A549 (cell line): ENCODE measurements at regions of chr12 and their contacts with region 1.

Region 1: GRCh38 chr12:25436203-25437030 is 116.7 kb downstream of the LMNTD1 start:
- DNase-seq: peak; percentile 63 to 83
- ATAC-seq: peak; percentile 83 to 88
- H3K4me3 ChIP-seq: peak overlapping the region; percentile 49
- H3K27ac ChIP-seq: peak overlapping the region; percentile 81 to 82
- H3K4me1 ChIP-seq: peaks cover 26% of the 10 kb centered on the region
- CTCF ChIP-seq: peak; percentile 96
- EP300 ChIP-seq: no peak
- POLR2A ChIP-seq: no peak
- RAD21 ChIP-seq: peak; percentile 89 to 90

Region 2: DNA sequence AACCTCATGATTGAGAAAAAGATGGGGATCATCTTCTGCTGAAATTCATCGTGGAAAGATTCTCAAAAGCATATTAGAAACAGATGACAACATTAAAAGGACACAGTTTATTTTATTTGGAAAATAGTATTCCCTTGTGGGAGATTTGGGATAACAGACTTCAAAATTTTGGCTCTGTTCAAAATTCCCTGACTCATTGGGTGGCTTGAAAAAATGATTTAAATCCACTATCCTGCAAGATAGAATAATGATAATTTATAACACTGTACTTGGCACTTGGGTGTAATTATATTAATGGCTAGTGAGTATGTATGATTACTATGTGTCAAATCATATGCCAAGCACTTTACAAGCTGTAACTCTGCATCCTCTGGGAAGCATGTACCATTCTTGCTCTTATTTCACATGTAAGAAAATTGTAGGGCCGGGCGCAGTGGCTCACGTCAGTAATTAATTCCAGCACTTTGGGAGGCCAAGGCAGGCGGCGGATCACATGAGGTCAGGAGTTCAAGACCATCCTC is 12.1 kb before region 1 on chr12:
- CTCF ChIA-PET with region 1: interaction called, 39 read pairs
- POLR2A ChIA-PET with region 1: no interaction called
- DNase-seq: no peak
- ATAC-seq: no peak
- H3K4me3 ChIP-seq: no peak overlapping the region
- H3K27ac ChIP-seq: no peak overlapping the region
- H3K4me1 ChIP-seq: peaks cover 9% of the 10 kb centered on the region; the same call in 2 of the 3 replicates
- CTCF ChIP-seq: no peak
- EP300 ChIP-seq: no peak
- POLR2A ChIP-seq: no peak
- RAD21 ChIP-seq: no peak

Region 3: GRCh38 chr12:25458047-25458552 is 21.7 kb after region 1 on chr12:
- CTCF ChIA-PET with region 1: interaction called, 14 read pairs
- POLR2A ChIA-PET with region 1: no interaction called
- DNase-seq: peak; percentile 61 to 68
- ATAC-seq: peak; percentile 92 to 97
- H3K4me3 ChIP-seq: peak overlapping the region; percentile 15; the same call in 1 of the 3 replicates
- H3K27ac ChIP-seq: 0 out of 6 replicates have a peak overlapping the region, but pooled peaks of 1 of the 2 experiments have one; percentile 2
- H3K4me1 ChIP-seq: peaks cover 13% of the 10 kb centered on the region; the same call in 2 of the 3 replicates
- CTCF ChIP-seq: no peak
- EP300 ChIP-seq: no peak
- POLR2A ChIP-seq: no peak
- RAD21 ChIP-seq: no peak

Region 4: GRCh38 chr12:26028953-26029735 is 592.7 kb after region 1 on chr12:
- CTCF ChIA-PET with region 1: interaction called, 11 read pairs
- POLR2A ChIA-PET with region 1: no interaction called
- DNase-seq: peak; percentile 37 to 63
- ATAC-seq: peak; percentile 56 to 74; a peak in 4 of 6 replicates
- H3K4me3 ChIP-seq: no peak overlapping the region
- H3K27ac ChIP-seq: no peak overlapping the region
- H3K4me1 ChIP-seq: peaks cover 9% of the 10 kb centered on the region; the same call in 2 of the 3 replicates
- CTCF ChIP-seq: peak; percentile 94
- EP300 ChIP-seq: no peak
- POLR2A ChIP-seq: no peak
- RAD21 ChIP-seq: peak; percentile 84 to 86

Region 5: DNA sequence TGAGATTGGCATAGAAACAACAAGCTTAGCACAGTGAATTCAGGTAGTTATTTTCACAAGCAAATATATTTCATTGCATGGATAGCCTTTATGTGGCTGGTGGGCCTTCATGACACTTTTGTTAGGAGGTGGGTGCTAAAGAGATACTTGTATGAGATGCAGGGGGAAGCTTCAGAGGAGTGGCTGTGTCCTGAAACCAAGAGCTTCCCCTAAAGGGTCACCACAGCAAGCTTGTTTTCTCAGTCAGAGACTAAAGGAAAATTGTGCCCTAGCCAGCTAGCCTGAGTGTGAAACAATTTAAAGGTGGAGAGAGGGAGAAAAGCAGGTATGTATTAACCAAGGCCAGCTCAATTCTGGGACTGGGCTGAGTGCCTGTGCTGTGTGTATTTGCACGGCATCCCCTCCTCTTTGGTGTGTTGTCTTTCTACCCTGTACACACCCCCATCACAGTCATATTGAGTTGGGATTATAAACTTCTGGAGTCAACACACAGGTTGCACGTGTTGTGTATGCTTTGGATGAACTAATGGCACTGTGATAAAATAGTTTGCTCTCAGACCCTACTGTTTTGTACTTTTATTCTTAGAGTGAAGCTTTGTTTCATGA is 601.3 kb after region 1 on chr12:
- CTCF ChIA-PET with region 1: interaction called, 28 read pairs
- POLR2A ChIA-PET with region 1: no interaction called
- DNase-seq: no peak
- ATAC-seq: no peak
- H3K4me3 ChIP-seq: no peak overlapping the region
- H3K27ac ChIP-seq: no peak overlapping the region
- H3K4me1 ChIP-seq: peaks cover 22% of the 10 kb centered on the region
- CTCF ChIP-seq: no peak
- EP300 ChIP-seq: no peak
- POLR2A ChIP-seq: no peak
- RAD21 ChIP-seq: no peak